ENCODE measurements at regions of chr21 and their contacts with region 1.

Region 1: GRCh38 chr21:31509194-31510017 is 150.1 kb upstream of the SOD1 start:
- DNase-seq: peak in 7 of 10 donors; percentile 44 to 95 (median 63)

Region 2: GRCh38 chr21:31457675-31458074 is 51.7 kb before region 1 on chr21:
- intact Hi-C with region 1: loop called (anchors 5 kb)
- DNase-seq: no peak

Measured in posterior cingulate gyrus (tissue), 11 donors.